Dorsolateral prefrontal cortex (tissue), 120 donors: ENCODE measurements at regions of chr16 and their contacts with region 1.

Region 1: GRCh38 chr16:85275533-85276249 is 163.4 kb upstream of the CIBAR2 start:
- DNase-seq: peak in 9 of 10 donors; percentile 66 to 91 (median 77)
- H3K4me3 ChIP-seq: no peak overlapping the region
- H3K27ac ChIP-seq: peak overlapping the region in 2 of 59 donors; percentile 12 to 54
- H3K27me3 ChIP-seq: no peaks in the 10 kb centered on the region
- CTCF ChIP-seq: peak; percentile 62 to 98 (median 95)

Region 2: GRCh38 chr16:84884596-84885341 is 390.9 kb before region 1 on chr16:
- intact Hi-C with region 1: no loop called
- DNase-seq: peak in 9 of 10 donors; percentile 33 to 73 (median 62)
- H3K4me3 ChIP-seq: peak overlapping the region in 54 of 59 donors; percentile 0 to 57 (median 30)
- H3K27ac ChIP-seq: peak overlapping the region in 56 of 59 donors; percentile 2 to 84 (median 64)
- H3K27me3 ChIP-seq: no peaks in the 10 kb centered on the region
- CTCF ChIP-seq: peak in 3 of 56 donors; percentile 5 to 24 (median 7)

Region 3: DNA sequence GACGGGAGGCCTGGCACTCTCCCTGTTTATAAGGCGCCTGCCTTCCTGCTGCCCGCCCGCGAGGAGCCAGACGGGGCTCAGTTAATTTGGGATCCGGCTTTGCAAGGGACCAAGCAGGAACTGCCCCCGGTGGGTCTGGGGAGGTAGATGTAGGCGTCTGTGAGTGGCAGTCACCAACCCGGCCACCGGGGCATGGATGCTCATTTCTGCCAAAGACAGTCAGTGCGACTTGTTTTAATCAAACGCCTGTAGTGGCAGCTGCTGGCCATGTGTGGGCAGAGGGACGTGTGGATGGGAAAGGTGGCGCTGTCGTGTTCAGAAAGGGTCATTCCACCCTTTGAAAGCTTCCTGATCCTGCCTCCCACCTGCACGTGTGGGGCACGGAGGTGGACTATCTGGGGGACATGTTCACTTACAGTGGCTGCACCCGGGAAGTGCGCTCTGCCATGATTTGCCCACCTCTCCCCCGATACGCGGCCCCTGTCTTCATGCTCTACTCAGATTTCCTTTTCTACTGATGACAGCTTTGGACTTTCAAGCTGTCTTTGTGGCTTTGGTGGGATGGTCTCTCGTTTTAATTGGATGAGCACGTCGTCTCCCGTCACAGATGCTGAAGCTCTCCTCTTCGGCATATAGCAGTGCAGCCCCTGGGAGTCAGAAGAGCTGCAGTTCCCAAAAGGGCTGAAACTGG is 103.1 kb before region 1 on chr16:
- intact Hi-C with region 1: no loop called
- DNase-seq: peak in 4 of 10 donors; percentile 34 to 82 (median 51)
- H3K4me3 ChIP-seq: peak overlapping the region in 33 of 59 donors; percentile 3 to 49 (median 27)
- H3K27ac ChIP-seq: peak overlapping the region in 1 of 59 donors; percentile 58
- H3K27me3 ChIP-seq: peaks cover 0 to 74% (median 26%) of the 10 kb centered on the region in 45 donors
- CTCF ChIP-seq: peak in 26 of 56 donors; percentile 6 to 34 (median 20)

Region 4: GRCh38 chr16:85428168-85428898 is 152.6 kb after region 1 on chr16:
- intact Hi-C with region 1: loop called in 1 of 2 experiments (anchors 5 kb)
- DNase-seq: peak in 8 of 10 donors; percentile 41 to 61 (median 52)
- H3K4me3 ChIP-seq: no peak overlapping the region
- H3K27ac ChIP-seq: no peak overlapping the region
- H3K27me3 ChIP-seq: no peaks in the 10 kb centered on the region
- CTCF ChIP-seq: peak in 55 of 56 donors; percentile 13 to 73 (median 58)